Posterior vena cava (tissue), 2 donors: ENCODE measurements at regions of chr11 and their contacts with region 1.

Region 1: GRCh38 chr11:38266691-38267090 is 1668.7 kb upstream of the RAG2 start:
- DNase-seq: no peak

Region 2: GRCh38 chr11:38156495-38157146 is 110.1 kb before region 1 on chr11:
- intact Hi-C with region 1: no loop called
- DNase-seq: no peak

Region 3: GRCh38 chr11:38191101-38191500 is 75.6 kb before region 1 on chr11:
- intact Hi-C with region 1: loop called in 1 of 2 experiments (anchors 2 kb)
- DNase-seq: no peak

Region 4: DNA sequence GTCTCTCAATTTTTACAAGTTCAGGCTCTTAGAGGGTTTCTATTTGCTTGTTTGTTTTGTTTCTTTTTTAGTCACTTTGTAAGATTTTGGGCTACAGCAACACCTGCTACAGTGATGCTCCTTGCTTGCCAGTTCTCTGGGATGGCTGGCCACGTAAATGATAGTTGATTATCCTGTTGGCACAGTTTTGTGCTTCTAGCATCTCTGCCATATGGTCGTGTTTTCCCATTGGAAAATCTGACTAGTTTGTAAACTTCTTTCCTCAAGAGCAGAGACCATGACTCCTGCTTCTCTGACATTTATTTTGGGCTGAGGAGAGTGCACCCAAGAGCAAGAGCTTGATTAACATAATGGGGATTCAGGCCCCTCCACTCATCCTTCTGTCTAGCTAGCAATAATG is 47.1 kb before region 1 on chr11:
- intact Hi-C with region 1: no loop called
- DNase-seq: no peak